Ascending aorta (tissue), 2 donors: ENCODE measurements at regions of chr19 and their contacts with region 1.

Region 1: DNA sequence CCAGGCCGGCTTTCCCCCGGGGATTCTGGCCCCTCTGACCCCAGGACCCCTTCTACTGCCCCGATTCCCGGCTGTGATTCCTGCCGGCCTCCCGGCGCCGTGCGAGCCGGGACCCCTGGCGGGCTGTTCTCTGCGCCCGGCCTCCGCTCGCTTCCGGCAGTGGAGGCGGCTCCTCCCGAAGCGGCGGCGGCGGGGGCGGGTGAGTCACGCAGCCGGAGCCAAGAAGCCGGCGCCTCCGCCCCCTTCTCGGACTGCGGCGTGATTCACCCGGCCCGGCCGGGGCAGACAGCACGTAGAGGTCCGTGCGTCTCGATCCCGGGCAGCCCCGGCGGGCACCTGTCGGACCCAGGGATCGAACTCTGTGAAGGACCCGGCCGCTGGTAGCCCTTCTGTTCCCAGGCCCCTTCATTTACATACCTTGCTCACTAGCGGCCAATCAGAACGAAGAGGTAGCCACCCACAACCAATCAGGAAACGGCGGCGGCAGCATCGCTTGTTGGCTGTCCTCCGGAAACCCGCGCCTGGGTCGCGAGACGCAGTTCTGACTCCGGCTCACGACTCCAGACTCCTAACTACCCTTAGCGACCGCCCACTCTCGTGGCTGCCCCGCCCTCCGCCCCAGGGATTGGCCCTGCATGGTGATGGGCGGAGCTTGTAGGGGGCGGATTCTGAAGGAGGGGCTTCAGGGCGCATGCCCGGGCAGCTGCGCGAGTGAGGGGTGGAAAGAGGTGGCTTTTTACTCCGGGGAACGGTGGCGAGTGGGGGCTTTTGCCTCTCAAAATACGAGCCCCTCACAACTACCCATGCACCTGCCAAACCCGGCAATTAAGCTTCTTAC is at the start of gene SERTAD1:
- DNase-seq: peak; percentile 99 to 100
- H3K4me3 ChIP-seq: peak within 1 kb of the TSS; percentile 62 to 83
- H3K27ac ChIP-seq: peak within 1 kb of the TSS; percentile 98 to 99
- H3K4me1 ChIP-seq: peaks cover 14 to 30% of the 10 kb centered on the region in 2 donors
- H3K27me3 ChIP-seq: no peaks in the 10 kb centered on the region
- CTCF ChIP-seq: peak; percentile 75 to 86 (median 85)
- total RNA-seq, gene SERTAD1: 39.7 TPM

Region 2: DNA sequence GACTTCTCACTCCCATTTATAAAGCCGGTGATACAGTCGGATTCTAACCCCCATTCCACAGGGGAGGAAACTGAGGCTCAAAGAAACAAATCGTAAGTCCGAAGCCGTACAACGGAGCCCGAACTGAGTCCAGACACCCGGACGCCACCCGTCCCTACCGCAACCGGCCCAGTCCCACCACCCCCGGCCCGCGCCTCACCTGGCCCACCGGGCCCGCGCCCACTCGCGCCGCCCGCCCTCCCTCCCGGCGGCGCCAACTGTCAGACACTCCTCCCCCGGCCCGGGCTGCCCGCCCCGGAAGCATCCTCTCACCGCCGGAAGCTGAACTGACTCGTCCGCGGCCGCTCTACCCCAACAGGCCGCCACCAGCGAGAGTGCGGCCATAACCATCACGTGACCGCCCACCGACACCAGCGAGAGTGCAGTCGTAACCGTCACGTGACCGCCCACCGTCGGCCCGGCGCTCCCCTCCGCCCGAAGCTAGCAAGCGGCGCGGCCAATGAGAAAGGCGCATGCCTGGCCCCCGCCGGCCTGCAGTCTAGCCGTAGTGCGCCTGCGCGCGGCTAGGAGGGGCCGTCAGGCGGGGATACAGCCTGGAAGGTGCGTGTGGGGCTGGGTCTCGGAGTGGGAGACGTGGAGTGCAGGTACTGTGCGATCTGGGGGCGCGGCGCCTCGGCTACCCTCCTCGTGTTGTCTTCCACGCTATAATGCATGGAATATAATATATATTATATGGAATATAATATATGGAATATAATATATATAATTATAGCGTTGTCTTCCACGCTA is 77.3 kb before region 1 on chr19 and contains the starts of genes C19orf47 and PLD3:
- intact Hi-C with region 1: loop called (anchors 2 kb)
- DNase-seq: peak; percentile 99 to 100
- H3K4me3 ChIP-seq: peak within 1 kb of the TSS; percentile 80 to 94
- H3K27ac ChIP-seq: peak within 1 kb of the TSS; percentile 51 to 85
- H3K4me1 ChIP-seq: peaks cover 4 to 10% of the 10 kb centered on the region in 2 donors
- H3K27me3 ChIP-seq: no peaks in the 10 kb centered on the region
- CTCF ChIP-seq: no peak
- total RNA-seq, gene C19orf47: 10.4 TPM
- total RNA-seq, gene PLD3: 345 TPM

Region 3: GRCh38 chr19:40403262-40403984 is 22.2 kb before region 1 on chr19:
- intact Hi-C with region 1: loop called (anchors 1 kb)
- DNase-seq: peak; percentile 63 to 95
- H3K4me3 ChIP-seq: peak overlapping the region; percentile 50 to 67
- H3K27ac ChIP-seq: peak overlapping the region; percentile 67 to 79
- H3K4me1 ChIP-seq: peaks cover 3 to 4% of the 10 kb centered on the region in 2 donors
- H3K27me3 ChIP-seq: no peaks in the 10 kb centered on the region
- CTCF ChIP-seq: peak in 1 of 3 experiments; percentile 13

Region 4: GRCh38 chr19:40603389-40604135 is 177.9 kb after region 1 on chr19:
- intact Hi-C with region 1: loop called (anchors 5 kb)
- DNase-seq: peak; percentile 96 to 99
- H3K4me3 ChIP-seq: peak overlapping the region; percentile 75 to 92
- H3K27ac ChIP-seq: peak overlapping the region; percentile 88 to 95
- H3K4me1 ChIP-seq: peaks cover 11 to 44% of the 10 kb centered on the region in 2 donors
- H3K27me3 ChIP-seq: no peaks in the 10 kb centered on the region
- CTCF ChIP-seq: no peak

Region 5: GRCh38 chr19:40798223-40798996 is 372.7 kb after region 1 on chr19:
- intact Hi-C with region 1: loop called (anchors 10 kb)
- DNase-seq: peak; percentile 100
- H3K4me3 ChIP-seq: peak overlapping the region; percentile 55 to 99
- H3K27ac ChIP-seq: peak overlapping the region; percentile 89 to 95
- H3K4me1 ChIP-seq: peaks cover 28 to 40% of the 10 kb centered on the region in 2 donors
- H3K27me3 ChIP-seq: no peaks in the 10 kb centered on the region
- CTCF ChIP-seq: peak; percentile 28 to 54 (median 48)